MCF 10A (cell line): ENCODE measurements at regions of chr20 and their contacts with region 1.

Region 1: DNA sequence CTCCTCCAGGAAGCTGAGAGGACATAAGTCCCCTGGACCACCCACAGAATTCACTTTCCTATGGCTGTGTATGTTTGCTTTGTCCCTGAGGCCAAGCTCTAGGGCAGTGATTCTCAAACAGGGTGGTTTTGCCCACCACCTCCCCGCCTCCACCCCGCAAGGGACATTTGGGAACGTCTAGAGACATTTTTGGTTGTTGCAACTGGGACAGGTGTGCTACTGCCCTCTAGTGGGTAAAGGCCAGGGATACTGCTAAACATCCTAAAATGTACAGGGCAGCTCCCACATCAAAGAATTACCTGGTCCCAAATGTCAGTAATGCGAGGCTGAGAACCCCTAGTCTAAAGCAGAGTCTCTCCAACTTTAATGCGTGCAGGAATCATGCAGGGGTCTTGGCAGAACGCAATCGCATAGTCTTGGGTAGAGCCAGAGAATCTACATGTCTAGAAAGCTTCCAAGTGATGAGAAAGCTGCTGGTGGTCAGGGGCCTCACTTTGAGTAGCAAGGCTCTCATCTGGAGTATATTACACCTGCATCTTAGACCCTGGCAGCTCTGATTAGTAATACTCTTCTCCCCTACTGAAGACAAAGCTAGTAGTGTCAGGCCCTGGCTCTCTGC is 5.1 kb downstream of the KCNS1 start:
- DNase-seq: peak; percentile 76
- H3K4me3 Mint-ChIP-seq: no peak overlapping the region
- H3K27ac Mint-ChIP-seq: no peak overlapping the region
- H3K4me1 Mint-ChIP-seq: no peaks in the 10 kb centered on the region
- H3K27me3 Mint-ChIP-seq: no peaks in the 10 kb centered on the region
- CTCF ChIP-seq: peak; percentile 72

Region 2: DNA sequence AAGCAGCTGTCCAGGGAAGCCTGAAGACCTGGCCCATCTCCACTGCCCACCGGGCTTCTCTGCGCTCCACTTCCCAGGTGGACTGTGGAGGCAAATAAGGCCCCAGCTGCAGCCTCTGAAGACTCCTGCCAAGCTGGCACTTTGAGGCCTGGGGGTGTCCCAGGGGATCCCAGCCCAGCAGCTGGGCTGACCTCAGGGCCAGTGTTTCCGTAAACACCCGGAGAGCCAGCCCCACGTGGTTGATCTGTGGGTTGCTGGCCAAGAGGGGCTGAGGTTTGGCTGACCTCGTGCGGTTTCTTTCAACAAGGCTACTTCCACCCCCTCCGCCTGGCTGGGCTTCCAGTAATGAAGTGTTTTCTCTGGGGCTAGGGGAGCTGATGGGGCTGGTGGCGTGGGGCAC is 393.1 kb before region 1 on chr20:
- CTCF ChIA-PET with region 1: no interaction called
- POLR2A ChIA-PET with region 1: no interaction called
- intact Hi-C with region 1: no loop called
- DNase-seq: peak; percentile 34
- H3K4me3 Mint-ChIP-seq: no peak overlapping the region
- H3K27ac Mint-ChIP-seq: no peak overlapping the region
- H3K4me1 Mint-ChIP-seq: peaks cover 19% of the 10 kb centered on the region
- H3K27me3 Mint-ChIP-seq: no peaks in the 10 kb centered on the region
- CTCF ChIP-seq: no peak

Region 3: GRCh38 chr20:45020236-45020886 is 75.5 kb before region 1 on chr20:
- CTCF ChIA-PET with region 1: interaction called, 177 read pairs
- POLR2A ChIA-PET with region 1: interaction called, 4 read pairs
- intact Hi-C with region 1: no loop called
- DNase-seq: peak; percentile 76
- H3K4me3 Mint-ChIP-seq: no peak overlapping the region
- H3K27ac Mint-ChIP-seq: peak overlapping the region; percentile 65
- H3K4me1 Mint-ChIP-seq: peaks cover 28% of the 10 kb centered on the region
- H3K27me3 Mint-ChIP-seq: no peaks in the 10 kb centered on the region
- CTCF ChIP-seq: no peak

Region 4: GRCh38 chr20:45052698-45053429 is 43.0 kb before region 1 on chr20:
- CTCF ChIA-PET with region 1: interaction called, 96 read pairs
- POLR2A ChIA-PET with region 1: interaction called, 4 read pairs
- intact Hi-C with region 1: no loop called
- DNase-seq: no peak
- H3K4me3 Mint-ChIP-seq: no peak overlapping the region
- H3K27ac Mint-ChIP-seq: no peak overlapping the region
- H3K4me1 Mint-ChIP-seq: no peaks in the 10 kb centered on the region
- H3K27me3 Mint-ChIP-seq: no peaks in the 10 kb centered on the region
- CTCF ChIP-seq: no peak

Region 5: DNA sequence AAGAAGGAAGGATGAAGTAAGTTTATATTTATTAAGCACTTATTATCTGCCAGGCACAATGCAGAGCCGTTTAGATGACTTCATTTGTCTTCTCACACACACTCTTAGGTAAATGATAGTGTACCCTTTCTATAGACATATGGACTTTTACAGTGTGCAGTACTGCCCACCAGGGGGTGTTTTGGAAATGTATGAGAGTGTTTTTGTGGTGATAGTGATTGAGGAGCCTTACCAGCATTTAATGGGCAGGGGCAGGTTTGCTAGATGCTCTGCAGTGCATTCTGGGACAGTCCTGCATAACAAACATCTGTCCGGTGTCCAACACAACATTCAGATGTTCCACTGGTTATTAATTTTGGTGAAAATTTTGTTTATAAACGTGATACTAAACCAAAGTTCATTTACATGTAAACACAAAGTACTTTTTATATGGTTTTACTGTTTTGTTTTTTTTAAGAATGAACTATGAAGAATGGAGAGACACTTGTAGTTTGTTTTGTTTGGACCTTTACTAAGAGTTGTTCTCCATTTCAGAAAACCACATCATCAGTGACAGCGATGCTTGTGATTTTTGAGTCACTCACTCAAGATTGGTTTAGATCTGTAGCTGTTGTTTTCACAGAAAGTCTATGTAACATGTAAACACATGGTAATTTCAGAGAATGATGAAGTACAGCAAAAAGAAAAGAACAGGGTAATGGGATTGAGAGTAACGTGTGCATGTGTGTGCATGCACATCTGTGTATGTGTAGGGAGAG is 14.8 kb before region 1 on chr20:
- CTCF ChIA-PET with region 1: interaction called, 41 read pairs
- POLR2A ChIA-PET with region 1: interaction called, 5 read pairs
- intact Hi-C with region 1: no loop called
- DNase-seq: peak; percentile 39
- H3K4me3 Mint-ChIP-seq: no peak overlapping the region
- H3K27ac Mint-ChIP-seq: no peak overlapping the region
- H3K4me1 Mint-ChIP-seq: no peaks in the 10 kb centered on the region
- H3K27me3 Mint-ChIP-seq: no peaks in the 10 kb centered on the region
- CTCF ChIP-seq: peak; percentile 33

Region 6: GRCh38 chr20:45138561-45139300 is 42.9 kb after region 1 on chr20:
- CTCF ChIA-PET with region 1: interaction called, 16 read pairs
- POLR2A ChIA-PET with region 1: no interaction called
- intact Hi-C with region 1: no loop called
- DNase-seq: peak; percentile 74
- H3K4me3 Mint-ChIP-seq: no peak overlapping the region
- H3K27ac Mint-ChIP-seq: no peak overlapping the region
- H3K4me1 Mint-ChIP-seq: no peaks in the 10 kb centered on the region
- H3K27me3 Mint-ChIP-seq: no peaks in the 10 kb centered on the region
- CTCF ChIP-seq: peak; percentile 85